ENCODE measurements at regions of chr5 and their contacts with region 1.

Region 1: DNA sequence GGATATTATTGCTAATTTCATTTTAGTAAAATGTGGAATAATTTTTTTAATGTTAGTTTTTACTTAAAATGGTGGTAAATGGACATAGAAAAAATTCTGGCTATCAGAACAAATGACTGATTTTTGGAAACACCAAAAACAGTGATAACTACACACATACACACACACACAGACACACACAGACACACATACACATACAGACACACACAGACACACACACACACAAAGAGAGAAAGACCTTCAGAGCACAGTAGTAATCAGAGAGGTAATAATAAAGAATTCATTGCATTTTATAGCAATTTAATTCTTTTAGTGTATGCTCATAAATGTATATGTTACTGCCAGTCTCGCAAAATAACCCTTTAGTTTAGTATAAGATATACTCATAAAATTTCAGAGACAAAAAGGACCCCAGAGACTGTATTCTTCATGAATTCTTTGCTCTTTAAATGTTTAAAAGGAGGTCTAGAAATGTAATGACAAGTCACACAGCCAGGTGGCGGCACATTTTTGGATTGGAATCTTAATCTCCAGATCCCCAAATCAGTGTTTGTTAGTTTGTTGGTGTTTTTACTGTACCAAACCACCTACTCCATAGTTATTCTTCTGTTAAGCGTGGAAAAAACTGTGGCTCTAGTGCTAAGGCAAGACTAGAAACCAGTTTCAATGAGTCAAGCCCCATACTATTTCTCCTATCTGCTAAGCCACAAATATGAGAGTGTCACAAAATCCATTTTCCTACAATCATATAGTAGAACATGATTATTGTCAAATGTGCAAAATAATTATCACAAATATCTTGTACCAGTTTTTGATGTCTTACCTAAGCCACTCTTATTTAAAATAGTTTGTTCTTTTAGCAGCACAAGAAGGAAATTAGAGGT is 109.9 kb downstream of the EDIL3 start:
- DNase-seq: peak; percentile 47
- H3K4me3 ChIP-seq: no peak overlapping the region
- H3K27ac ChIP-seq: no peak overlapping the region
- H3K4me1 ChIP-seq: no peaks in the 10 kb centered on the region
- H3K27me3 ChIP-seq: no peaks in the 10 kb centered on the region
- CTCF ChIP-seq: peak; percentile 65

Region 2: DNA sequence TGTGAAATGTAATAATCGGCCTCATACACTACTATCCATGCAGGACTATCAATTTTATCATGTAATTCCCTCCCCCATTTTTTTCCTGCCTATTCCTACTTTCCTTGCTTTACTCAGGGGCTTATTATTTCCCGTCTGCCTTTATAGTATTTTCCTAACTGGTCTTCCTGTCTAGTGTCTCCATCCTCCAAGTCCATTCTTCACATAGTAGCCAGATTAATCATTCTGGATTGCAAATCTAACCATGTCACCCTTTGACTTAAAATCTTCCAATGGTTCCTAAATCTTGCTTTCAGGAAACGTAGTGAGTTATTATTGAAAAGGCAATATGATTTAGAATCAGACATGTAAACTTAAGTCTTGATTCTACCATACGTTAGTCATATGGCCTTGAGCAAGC is 246.7 kb before region 1 on chr5:
- CTCF ChIA-PET with region 1: no interaction called
- POLR2A ChIA-PET with region 1: no interaction called
- intact Hi-C with region 1: no loop called
- DNase-seq: no peak
- H3K4me3 ChIP-seq: no peak overlapping the region
- H3K27ac ChIP-seq: no peak overlapping the region
- H3K4me1 ChIP-seq: no peaks in the 10 kb centered on the region
- H3K27me3 ChIP-seq: no peaks in the 10 kb centered on the region
- CTCF ChIP-seq: no peak

Region 3: GRCh38 chr5:84382363-84383295 is 107.8 kb after region 1 on chr5:
- CTCF ChIA-PET with region 1: no interaction called
- POLR2A ChIA-PET with region 1: no interaction called
- intact Hi-C with region 1: loop called (anchors 5 kb)
- DNase-seq: peak; percentile 51
- H3K4me3 ChIP-seq: peak overlapping the region; percentile 55
- H3K27ac ChIP-seq: no peak overlapping the region
- H3K4me1 ChIP-seq: peaks cover 15% of the 10 kb centered on the region
- H3K27me3 ChIP-seq: peaks cover 50% of the 10 kb centered on the region
- CTCF ChIP-seq: no peak

Region 4: DNA sequence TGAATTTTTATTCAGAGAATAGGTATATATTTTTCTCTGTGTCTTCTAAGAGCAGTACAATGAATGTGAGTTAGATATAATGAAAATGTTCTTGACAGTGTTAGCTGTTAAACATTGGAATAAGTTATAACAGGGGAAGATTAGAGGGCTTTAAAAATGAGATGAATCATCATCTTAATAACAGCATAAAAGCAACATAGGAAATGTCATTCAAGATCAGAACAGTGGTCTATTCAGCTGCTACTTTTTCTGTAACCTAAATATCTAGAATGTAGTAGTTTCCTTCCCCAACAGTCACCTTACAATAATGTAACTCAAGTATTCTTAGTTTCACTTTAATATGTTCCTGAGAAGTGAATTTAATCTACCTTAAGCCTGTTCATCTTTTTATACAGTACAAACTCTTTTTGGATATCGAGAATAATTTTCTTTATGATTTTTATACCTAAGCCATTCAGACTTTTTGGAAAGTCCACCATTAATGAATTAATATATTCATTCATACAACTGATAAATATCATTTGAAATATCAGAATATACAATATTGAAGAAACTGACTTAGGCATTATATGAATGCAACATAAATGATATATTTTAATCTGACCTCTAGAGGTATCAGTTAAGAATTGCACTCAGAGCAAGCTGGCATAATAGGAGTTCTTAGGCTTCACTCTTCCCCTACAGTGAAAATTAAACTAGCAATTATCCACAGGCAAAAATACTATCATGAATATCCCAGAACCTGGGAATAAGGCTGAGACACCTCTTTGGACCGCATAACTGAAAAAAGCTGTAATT is 176.0 kb after region 1 on chr5:
- CTCF ChIA-PET with region 1: no interaction called
- POLR2A ChIA-PET with region 1: no interaction called
- intact Hi-C with region 1: loop called (anchors 10 kb)
- DNase-seq: peak; percentile 3
- H3K4me3 ChIP-seq: no peak overlapping the region
- H3K27ac ChIP-seq: no peak overlapping the region
- H3K4me1 ChIP-seq: no peaks in the 10 kb centered on the region
- H3K27me3 ChIP-seq: no peaks in the 10 kb centered on the region
- CTCF ChIP-seq: peak; percentile 44

Measured in A673 (cell line).